ENCODE measurements at regions of chr1 and their contacts with region 1.

Region 1: GRCh38 chr1:158019171-158019868 is 25.9 kb downstream of the KIRREL1 start:
- H3K4me3 ChIP-seq: no peak overlapping the region
- H3K27ac ChIP-seq: no peak overlapping the region
- H3K4me1 ChIP-seq: peaks cover 11% of the 10 kb centered on the region
- CTCF ChIP-seq: no peak

Region 2: GRCh38 chr1:158035976-158036583 is 16.8 kb after region 1 on chr1:
- CTCF ChIA-PET with region 1: interaction called, 26 read pairs
- POLR2A ChIA-PET with region 1: no interaction called
- H3K4me3 ChIP-seq: no peak overlapping the region
- H3K27ac ChIP-seq: no peak overlapping the region
- H3K4me1 ChIP-seq: no peaks in the 10 kb centered on the region
- CTCF ChIP-seq: 0 out of 2 replicates have a peak, but pooled peaks have one; percentile 36